Left colon (tissue), 2 donors: ENCODE measurements at regions of chr2 and their contacts with region 1.

Region 1: DNA sequence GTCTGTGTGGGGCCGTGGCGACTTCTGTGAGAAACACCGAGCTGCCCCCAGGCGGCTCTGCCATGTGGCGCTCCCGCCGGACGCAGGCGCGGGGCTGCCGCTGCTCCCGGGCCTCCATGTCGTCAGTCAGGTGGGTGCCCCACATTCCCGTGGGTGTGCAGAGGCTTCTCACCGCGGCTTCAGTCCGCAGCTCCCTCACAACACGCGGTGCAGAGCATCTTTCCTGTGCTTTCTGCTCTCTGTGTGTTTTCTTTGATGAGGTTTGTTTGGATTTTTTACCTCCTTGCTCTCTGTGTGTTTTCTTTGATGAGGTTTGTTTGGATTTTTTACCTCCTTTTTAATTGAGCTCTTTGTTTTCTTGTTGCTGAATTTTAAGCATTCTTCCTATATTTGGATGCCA is 13.0 kb downstream of the AQP12A start:
- DNase-seq: no peak
- ATAC-seq: no peak

Region 2: GRCh38 chr2:240513549-240514287 is 190.9 kb before region 1 on chr2:
- intact Hi-C with region 1: loop called in 1 of 2 experiments (anchors 10 kb)
- DNase-seq: peak; percentile 74 to 91
- ATAC-seq: peak; percentile 97

Region 3: GRCh38 chr2:240765007-240765406 is 60.4 kb after region 1 on chr2:
- intact Hi-C with region 1: no loop called
- DNase-seq: no peak
- ATAC-seq: no peak